WTC11 (cell line): ENCODE measurements at regions of chr3 and their contacts with region 1.

Region 1: DNA sequence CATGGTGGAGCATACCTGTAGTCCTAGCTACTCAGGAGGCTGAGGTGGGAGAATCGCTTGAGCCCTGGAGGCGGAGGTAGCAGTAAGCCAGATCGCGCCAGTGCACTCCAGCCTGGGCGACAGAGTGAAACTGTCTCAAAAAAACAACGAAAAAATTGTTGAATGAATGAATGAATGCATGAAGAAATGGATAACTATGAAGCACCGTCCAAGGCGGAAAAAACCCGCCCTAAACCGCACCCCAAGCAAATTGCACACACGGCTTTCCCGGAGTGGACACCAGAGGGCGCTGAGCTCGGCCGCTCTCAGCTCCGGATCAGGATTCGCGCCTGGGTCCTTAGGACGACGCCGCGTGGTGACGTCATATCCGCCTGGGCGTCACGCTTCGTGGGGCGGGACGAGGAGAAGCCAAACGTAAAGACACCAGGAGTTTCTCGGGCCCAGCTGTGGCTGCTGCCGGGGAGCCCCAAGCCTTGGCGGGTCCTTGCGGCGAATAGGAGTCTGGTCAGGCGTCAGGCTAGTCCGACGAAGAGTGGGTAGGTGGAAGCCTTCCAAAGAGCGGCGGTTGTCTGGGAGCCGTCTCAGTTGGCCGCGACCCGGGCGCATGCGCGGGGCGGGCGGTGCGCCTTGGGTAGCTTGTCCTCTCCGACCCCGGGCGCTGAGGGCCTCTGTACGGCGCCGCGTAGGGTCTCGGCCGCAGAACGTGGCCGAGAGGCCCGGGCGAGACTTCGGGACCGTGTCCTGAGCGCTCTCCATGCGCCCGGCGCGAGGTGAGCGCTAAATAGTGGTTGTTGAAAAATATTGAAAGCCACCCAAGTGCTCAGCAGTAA is at the starts of genes HTD2 and RPP14:
- DNase-seq: peak; percentile 97
- ATAC-seq: peak; percentile 82
- H3K4me3 Mint-ChIP-seq: peak within 1 kb of the TSS; percentile 95
- H3K27ac Mint-ChIP-seq: peak within 1 kb of the TSS; percentile 98
- H3K4me1 Mint-ChIP-seq: peaks cover 11% of the 10 kb centered on the region
- H3K27me3 Mint-ChIP-seq: peaks cover 17% of the 10 kb centered on the region
- CTCF ChIP-seq: peak; percentile 83
- total RNA-seq, gene HTD2: 9.9 to 14.5 TPM (median 11.4 TPM) in 3 replicates
- total RNA-seq, gene RPP14: 16.7 to 17.9 TPM (median 17.0 TPM) in 3 replicates

Region 2: DNA sequence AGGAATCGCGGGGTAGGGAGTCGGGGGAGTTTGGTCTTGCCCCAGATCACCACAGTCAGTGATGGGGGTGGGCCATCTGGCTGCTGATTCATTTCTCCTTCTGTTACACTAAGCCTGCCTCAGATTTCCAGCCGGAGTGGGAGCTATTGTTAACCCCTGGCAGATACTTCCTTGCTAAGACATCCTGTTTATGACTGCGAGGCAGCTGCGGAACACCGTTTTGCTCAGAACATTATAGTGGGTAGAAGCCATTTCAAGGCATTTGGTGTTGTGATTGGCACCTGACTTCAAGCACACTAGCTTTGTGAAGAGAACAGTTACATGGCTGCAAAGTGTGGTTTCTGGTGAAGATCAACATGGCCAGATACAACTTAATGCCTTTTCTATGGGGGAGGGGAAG is 224.1 kb before region 1 on chr3:
- CTCF ChIA-PET with region 1: no interaction called
- POLR2A ChIA-PET with region 1: no interaction called
- DNase-seq: no peak
- ATAC-seq: no peak
- H3K4me3 Mint-ChIP-seq: no peak overlapping the region
- H3K27ac Mint-ChIP-seq: peak overlapping the region; percentile 94
- H3K4me1 Mint-ChIP-seq: peaks cover 21% of the 10 kb centered on the region
- H3K27me3 Mint-ChIP-seq: no peaks in the 10 kb centered on the region
- CTCF ChIP-seq: no peak

Region 3: DNA sequence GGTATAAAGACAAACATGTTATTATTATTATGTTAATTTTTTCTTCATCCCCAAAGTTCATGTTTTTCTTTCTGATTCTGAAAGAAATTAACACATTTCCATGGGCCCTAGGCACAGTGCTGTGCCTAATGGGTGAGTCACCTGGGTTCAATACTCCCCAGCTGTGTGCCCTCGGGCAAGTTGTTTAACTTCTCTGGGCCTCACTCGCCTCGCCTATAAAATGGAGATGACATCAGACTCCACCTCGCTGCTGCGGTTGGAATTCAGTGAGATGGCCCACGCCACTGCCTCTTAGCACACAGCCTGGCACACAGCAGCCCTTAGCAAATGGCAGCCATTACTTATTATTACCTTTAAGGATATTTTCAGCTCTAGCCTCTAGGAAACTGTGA is 117.9 kb before region 1 on chr3:
- CTCF ChIA-PET with region 1: interaction called, 126 read pairs
- POLR2A ChIA-PET with region 1: interaction called, 7 read pairs
- DNase-seq: no peak
- ATAC-seq: no peak
- H3K4me3 Mint-ChIP-seq: no peak overlapping the region
- H3K27ac Mint-ChIP-seq: no peak overlapping the region; the same call in 1 of the 2 replicates
- H3K4me1 Mint-ChIP-seq: peaks cover 16% of the 10 kb centered on the region
- H3K27me3 Mint-ChIP-seq: no peaks in the 10 kb centered on the region
- CTCF ChIP-seq: no peak

Region 4: DNA sequence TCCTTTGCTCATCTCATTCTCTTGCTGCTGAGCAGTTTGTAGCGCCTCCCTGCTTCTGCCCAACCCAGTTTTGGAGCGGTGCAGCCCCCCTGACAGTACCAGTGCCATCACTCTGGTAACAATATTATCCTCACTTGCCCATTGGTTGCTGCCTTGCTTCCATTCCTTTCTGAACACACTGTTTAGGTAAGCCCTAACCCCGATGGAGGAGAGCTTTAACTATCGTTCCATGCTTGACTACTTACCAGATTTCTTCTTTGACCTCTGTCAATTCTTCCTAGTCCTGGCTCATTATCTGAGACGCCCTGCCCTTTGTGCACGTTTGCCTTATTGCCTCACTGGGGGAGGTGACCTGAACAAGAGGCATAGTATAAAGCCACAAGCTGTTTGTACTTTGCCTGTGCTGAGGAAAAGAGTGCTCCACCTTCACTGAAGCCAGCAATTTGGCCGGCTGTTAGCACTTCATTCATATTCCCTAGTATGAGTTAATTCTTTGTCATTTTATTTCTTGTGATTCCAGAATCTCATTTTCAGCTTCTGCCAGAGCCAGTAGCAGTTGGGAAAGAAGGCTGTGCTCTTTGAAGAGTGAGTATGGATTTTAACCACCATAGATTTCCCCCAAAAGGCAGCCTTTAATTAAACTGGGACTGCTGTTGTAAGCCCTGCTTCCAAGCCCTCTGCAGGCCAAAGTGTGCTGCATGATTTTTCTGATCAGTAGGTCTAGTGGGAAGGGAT is 56.6 kb before region 1 on chr3:
- CTCF ChIA-PET with region 1: interaction called, 20 read pairs
- POLR2A ChIA-PET with region 1: no interaction called
- DNase-seq: no peak
- ATAC-seq: peak; percentile 77
- H3K4me3 Mint-ChIP-seq: no peak overlapping the region
- H3K27ac Mint-ChIP-seq: peak overlapping the region; percentile 76; the same call in 1 of the 2 replicates
- H3K4me1 Mint-ChIP-seq: peaks cover 6% of the 10 kb centered on the region
- H3K27me3 Mint-ChIP-seq: no peaks in the 10 kb centered on the region
- CTCF ChIP-seq: no peak

Region 5: GRCh38 chr3:58349792-58350626 is 43.9 kb after region 1 on chr3:
- CTCF ChIA-PET with region 1: interaction called, 11 read pairs
- POLR2A ChIA-PET with region 1: no interaction called
- DNase-seq: no peak
- ATAC-seq: no peak
- H3K4me3 Mint-ChIP-seq: no peak overlapping the region
- H3K27ac Mint-ChIP-seq: no peak overlapping the region
- H3K4me1 Mint-ChIP-seq: peaks cover 14% of the 10 kb centered on the region
- H3K27me3 Mint-ChIP-seq: no peaks in the 10 kb centered on the region
- CTCF ChIP-seq: no peak

Region 6: GRCh38 chr3:58491506-58492402 is 185.7 kb after region 1 on chr3 and contains the start of gene KCTD6:
- CTCF ChIA-PET with region 1: interaction called, 24 read pairs
- POLR2A ChIA-PET with region 1: interaction called, 4 read pairs
- DNase-seq: peak; percentile 97
- ATAC-seq: peak; percentile 97
- H3K4me3 Mint-ChIP-seq: peak within 1 kb of the TSS; percentile 89
- H3K27ac Mint-ChIP-seq: peak within 1 kb of the TSS; percentile 86
- H3K4me1 Mint-ChIP-seq: peaks cover 63% of the 10 kb centered on the region
- H3K27me3 Mint-ChIP-seq: peaks cover 12% of the 10 kb centered on the region
- CTCF ChIP-seq: peak; percentile 66
- total RNA-seq, gene KCTD6: 15.2 to 16.4 TPM (median 15.5 TPM) in 3 replicates

Region 7: GRCh38 chr3:58529516-58530353 is 223.6 kb after region 1 on chr3:
- CTCF ChIA-PET with region 1: interaction called, 11 read pairs
- POLR2A ChIA-PET with region 1: no interaction called
- DNase-seq: peak; percentile 88
- ATAC-seq: peak; percentile 88
- H3K4me3 Mint-ChIP-seq: no peak overlapping the region
- H3K27ac Mint-ChIP-seq: peak overlapping the region; percentile 63; the same call in 1 of the 2 replicates
- H3K4me1 Mint-ChIP-seq: peaks cover 14% of the 10 kb centered on the region
- H3K27me3 Mint-ChIP-seq: no peaks in the 10 kb centered on the region
- CTCF ChIP-seq: peak; percentile 32; the same call in 1 of the 2 replicates